Astrocyte of the cerebellum (primary cell): ENCODE measurements at regions of chr2 and their contacts with region 1.

Region 1: GRCh38 chr2:209423562-209424198 is at the start of gene MAP2:
- DNase-seq: peak; percentile 59
- H3K4me3 ChIP-seq: peak within 1 kb of the TSS; percentile 85
- CTCF ChIP-seq: peak; percentile 74

Region 2: DNA sequence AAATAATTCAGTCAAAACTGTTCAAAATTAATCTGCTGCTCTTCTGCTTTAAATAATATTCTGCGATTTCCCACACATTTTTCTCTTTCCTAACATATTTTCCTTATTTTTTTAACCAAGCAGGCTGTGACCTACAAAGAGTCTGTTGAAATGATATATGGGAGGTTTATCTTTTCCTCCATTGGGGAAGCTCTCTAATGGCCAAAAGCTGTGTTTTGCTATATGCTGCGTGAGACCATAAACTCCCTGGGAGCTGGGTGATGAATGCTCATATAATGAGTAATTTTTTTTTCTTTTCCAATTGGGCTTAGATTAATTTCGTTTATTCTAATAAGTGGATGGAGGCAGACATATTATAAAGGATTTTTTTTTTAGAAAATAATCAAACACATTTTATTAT is 72.0 kb before region 1 on chr2:
- in situ Hi-C with region 1: no loop called
- DNase-seq: no peak
- H3K4me3 ChIP-seq: no peak overlapping the region
- CTCF ChIP-seq: no peak

Region 3: DNA sequence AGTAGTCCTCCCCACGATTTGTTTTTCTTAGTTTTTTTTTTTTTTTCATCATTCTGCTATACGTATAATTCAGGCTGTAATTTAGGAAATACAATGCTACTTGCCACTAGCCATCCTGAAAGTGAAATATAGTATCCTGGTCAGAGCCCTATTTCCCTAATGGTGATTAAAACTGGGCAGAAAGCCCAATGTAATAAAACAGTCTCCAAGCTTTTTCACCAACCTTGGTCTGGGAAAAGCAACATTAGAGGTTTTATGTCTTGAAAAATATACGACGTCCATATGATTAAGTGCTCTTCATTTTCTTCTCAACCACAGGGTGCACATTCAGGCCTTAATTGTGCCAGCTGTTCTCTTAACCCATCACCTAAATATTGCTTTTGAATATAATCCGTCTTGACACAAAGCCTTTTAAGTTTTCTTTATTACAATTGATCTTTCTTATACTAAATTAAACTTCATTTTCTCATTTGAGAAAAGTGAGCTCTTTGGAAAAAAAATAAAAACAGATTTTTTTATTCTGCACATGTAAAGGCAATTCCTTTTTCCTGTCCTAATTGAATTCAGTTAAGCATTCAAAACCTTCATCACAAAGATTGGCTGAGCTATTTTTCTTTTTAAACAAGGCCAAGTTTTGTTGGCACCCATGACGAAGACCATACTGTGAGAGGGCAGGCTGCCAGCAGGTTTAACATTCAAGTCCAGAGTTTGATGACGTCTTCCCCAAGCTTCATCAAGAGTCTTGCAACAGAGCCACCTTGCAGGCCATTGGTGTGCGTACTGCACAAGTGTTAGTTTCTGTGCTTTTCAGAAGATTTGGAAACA is 52.9 kb after region 1 on chr2:
- in situ Hi-C with region 1: loop called (anchors 5 kb)
- DNase-seq: peak; percentile 99
- H3K4me3 ChIP-seq: no peak overlapping the region
- CTCF ChIP-seq: no peak

Region 4: DNA sequence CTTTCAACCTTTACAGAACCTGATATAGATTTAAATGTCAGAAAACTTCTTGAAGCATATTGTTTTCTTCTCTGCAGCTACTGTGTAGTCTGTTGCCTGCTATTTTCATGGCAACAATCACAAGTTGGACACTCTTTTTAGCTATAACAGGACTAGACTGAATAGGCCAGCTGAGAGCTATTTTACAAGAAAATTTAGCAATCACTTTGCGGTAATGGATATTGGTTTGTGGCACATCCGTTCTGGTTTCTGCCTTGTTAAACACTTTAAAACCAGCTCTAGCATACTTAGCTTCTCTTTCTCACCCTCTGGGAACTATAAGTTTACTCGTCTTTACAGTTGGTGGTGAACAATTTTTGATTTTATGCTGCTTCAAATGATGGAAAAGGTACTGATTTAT is 125.9 kb after region 1 on chr2:
- in situ Hi-C with region 1: loop called (anchors 10 kb)
- DNase-seq: no peak
- H3K4me3 ChIP-seq: no peak overlapping the region
- CTCF ChIP-seq: no peak

Region 5: DNA sequence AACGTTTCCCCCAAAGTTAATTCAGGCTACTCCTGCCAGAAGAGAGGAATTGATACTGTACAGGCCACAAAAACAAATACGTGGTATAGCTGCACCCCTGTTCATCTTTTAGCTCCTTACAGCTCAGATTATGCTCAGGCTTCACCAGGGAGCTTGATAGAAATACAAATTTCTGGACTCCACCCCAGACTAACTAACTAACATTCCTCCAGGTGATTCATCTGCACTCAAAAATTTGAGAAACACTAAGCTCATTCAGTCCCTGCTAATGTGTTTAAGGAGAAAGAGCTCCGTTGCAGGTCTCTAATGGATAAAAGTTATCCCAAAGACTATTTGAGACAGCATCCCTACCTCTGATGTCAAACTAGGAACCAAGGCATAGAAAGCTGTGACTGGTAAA is 311.1 kb after region 1 on chr2:
- in situ Hi-C with region 1: no loop called
- DNase-seq: no peak
- H3K4me3 ChIP-seq: no peak overlapping the region
- CTCF ChIP-seq: no peak